Activated CD4-positive, alpha-beta T cell treated with anti-CD3 and anti-CD28 coated beads for 36 hours (primary cell): ENCODE measurements at regions of chr13 and their contacts with region 1.

Region 1: DNA sequence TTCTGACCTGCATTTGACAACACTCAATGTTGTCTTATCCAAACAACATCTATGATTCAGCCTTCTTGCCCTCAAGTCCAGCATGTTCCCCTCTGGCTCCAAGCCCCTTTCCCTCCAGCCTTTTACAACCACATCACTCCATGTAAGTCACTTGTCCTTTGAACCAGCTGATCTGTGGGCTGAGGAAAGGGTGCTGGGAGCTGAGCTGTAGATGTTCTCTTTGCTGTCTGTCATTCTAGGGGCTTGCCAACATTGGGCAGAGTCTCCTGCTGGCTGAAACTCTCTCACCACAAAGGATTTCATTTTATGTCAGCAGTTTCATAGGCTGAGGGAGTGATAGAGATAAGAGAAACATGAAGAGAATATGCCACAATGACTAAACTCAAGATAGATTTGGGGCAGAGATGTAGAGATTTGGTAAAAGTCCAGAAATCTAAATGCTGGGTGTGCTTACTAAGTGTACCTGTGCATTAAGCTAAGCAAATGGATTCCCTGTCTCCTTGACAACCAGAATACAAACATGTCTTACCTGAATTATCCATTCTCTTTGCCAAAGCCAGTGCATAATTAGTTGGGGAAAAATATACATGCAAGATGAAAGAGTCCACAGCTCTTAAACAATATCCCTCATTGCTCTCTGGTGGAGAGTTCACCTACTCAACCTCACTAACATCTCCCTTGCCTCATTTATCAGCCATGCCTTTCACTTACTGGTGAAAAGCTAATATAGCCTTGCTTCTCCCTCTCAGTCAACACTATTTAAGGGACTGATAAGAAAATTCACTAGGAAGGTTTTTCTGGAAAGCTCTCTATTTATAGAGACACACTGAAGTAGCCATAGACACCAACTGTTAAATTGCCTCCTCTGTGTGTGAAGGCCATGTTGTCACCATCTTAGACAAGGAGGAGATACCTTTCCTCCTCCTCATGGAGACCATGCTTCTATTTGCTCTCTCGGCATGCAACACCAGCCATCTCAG is 175.5 kb upstream of the SERP2 start:
- DNase-seq: peak; percentile 65
- ATAC-seq: peak; percentile 91
- H3K4me3 Mint-ChIP-seq: no peak overlapping the region
- H3K27ac Mint-ChIP-seq: no peak overlapping the region
- H3K4me1 Mint-ChIP-seq: peaks cover 40% of the 10 kb centered on the region
- H3K27me3 Mint-ChIP-seq: peaks cover 28% of the 10 kb centered on the region

Region 2: GRCh38 chr13:44237276-44237767 is 39.2 kb after region 1 on chr13:
- CTCF ChIA-PET with region 1: no interaction called
- POLR2A ChIA-PET with region 1: no interaction called
- intact Hi-C with region 1: loop called in 1 of 2 experiments (anchors 1 kb)
- DNase-seq: peak; percentile 40
- ATAC-seq: peak; percentile 84
- H3K4me3 Mint-ChIP-seq: no peak overlapping the region
- H3K27ac Mint-ChIP-seq: no peak overlapping the region
- H3K4me1 Mint-ChIP-seq: peaks cover 7% of the 10 kb centered on the region
- H3K27me3 Mint-ChIP-seq: peaks cover 9% of the 10 kb centered on the region

Region 3: DNA sequence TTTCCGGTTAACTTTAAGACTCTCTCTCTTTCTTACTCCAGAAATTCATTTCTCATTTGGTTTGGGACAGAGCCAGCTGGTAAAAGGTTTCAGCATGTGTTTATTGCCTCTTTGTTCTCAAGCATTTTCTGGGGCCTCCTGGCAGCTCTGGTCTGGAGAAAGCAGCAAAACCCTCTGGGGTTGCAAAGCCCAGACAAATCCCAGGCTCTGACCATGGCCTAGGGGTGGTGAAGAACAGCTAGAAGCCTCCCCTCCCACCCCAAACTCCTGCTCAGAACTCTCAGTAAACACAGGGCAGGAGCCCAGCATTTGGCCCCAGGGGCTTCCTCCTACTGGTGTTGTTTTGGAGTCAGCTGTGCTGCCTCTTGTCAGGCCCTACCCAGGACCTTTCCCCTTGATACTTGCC is 51.4 kb after region 1 on chr13:
- CTCF ChIA-PET with region 1: no interaction called
- POLR2A ChIA-PET with region 1: no interaction called
- intact Hi-C with region 1: no loop called
- DNase-seq: no peak
- ATAC-seq: no peak
- H3K4me3 Mint-ChIP-seq: no peak overlapping the region
- H3K27ac Mint-ChIP-seq: no peak overlapping the region
- H3K4me1 Mint-ChIP-seq: no peaks in the 10 kb centered on the region
- H3K27me3 Mint-ChIP-seq: no peaks in the 10 kb centered on the region

Region 4: DNA sequence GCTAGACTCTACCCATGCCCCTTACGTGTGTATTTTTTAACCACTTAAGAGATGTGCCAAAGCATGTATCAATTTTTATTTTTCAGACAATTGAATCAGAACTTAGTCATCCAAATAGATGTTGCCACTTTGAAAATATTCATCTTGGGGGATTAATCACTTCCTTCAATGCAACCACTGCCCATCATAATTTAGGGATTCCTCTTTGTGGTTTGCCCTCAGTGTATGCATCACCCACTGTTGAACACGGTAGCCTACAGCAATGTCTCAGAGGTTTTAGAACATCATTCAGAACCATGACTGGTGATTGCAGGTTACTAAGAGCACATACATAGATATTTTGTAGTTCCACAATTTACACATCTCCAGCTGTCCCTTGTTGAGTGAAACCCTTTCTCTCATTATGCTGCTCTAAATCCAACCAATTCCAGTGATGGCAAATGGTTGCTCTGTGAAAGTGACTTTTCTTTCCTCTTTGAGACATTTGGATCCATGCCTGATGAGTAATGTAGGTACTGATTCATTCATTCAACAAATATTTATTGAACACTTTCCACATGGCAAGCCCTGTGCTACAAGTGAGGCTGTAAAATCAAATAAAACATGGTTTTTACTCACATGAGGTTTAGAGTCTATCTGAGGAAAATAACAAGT is 114.9 kb after region 1 on chr13:
- CTCF ChIA-PET with region 1: interaction called, 3 read pairs
- POLR2A ChIA-PET with region 1: no interaction called
- intact Hi-C with region 1: loop called (anchors 1 kb)
- DNase-seq: peak; percentile 47
- ATAC-seq: peak; percentile 95
- H3K4me3 Mint-ChIP-seq: no peak overlapping the region
- H3K27ac Mint-ChIP-seq: peak overlapping the region; percentile 81
- H3K4me1 Mint-ChIP-seq: peaks cover 18% of the 10 kb centered on the region
- H3K27me3 Mint-ChIP-seq: peaks cover 28% of the 10 kb centered on the region

Region 5: GRCh38 chr13:44435142-44435982 is 237.3 kb after region 1 on chr13:
- CTCF ChIA-PET with region 1: interaction called, 14 read pairs
- POLR2A ChIA-PET with region 1: no interaction called
- intact Hi-C with region 1: loop called in 1 of 2 experiments (anchors 1 kb)
- DNase-seq: peak; percentile 94
- ATAC-seq: peak; percentile 84
- H3K4me3 Mint-ChIP-seq: peak overlapping the region; percentile 73
- H3K27ac Mint-ChIP-seq: peak overlapping the region; percentile 55
- H3K4me1 Mint-ChIP-seq: peaks cover 18% of the 10 kb centered on the region
- H3K27me3 Mint-ChIP-seq: peaks cover 11% of the 10 kb centered on the region

Region 6: DNA sequence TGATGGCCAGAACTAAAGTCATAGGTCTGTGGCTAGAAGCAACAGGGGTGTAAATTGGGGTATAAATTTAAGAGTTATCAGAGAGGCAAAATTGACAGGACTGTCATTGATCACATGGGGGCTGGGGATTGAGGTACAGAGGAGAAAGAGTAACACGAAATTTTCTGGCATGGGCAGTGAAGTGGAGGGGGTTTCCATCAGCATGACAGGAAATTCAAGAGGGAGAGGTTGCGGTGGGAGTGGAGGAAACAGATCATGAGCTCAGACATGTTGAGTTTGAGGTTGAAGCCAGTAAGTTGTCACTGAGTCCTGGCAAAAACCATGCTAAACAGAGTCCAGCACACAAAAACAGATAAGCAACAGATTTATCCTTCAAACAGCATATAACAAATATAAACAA is 570.2 kb after region 1 on chr13:
- CTCF ChIA-PET with region 1: no interaction called
- POLR2A ChIA-PET with region 1: no interaction called
- intact Hi-C with region 1: loop called in 1 of 2 experiments (anchors 2 kb)
- DNase-seq: peak; percentile 69
- ATAC-seq: peak; percentile 70
- H3K4me3 Mint-ChIP-seq: peak overlapping the region; percentile 5
- H3K27ac Mint-ChIP-seq: peak overlapping the region; percentile 90
- H3K4me1 Mint-ChIP-seq: peaks cover 28% of the 10 kb centered on the region
- H3K27me3 Mint-ChIP-seq: no peaks in the 10 kb centered on the region